ENCODE measurements at regions of chr9 and their contacts with region 1.

Region 1: GRCh38 chr9:37626708-37627293 is 24.0 kb upstream of the FRMPD1 start:
- DNase-seq: no peak
- ATAC-seq: no peak
- H3K4me3 ChIP-seq: no peak overlapping the region
- H3K27ac ChIP-seq: no peak overlapping the region
- H3K4me1 ChIP-seq: no peaks in the 10 kb centered on the region
- H3K27me3 ChIP-seq: no peaks in the 10 kb centered on the region
- CTCF ChIP-seq: no peak

Region 2: GRCh38 chr9:37706290-37706689 is 79.5 kb after region 1 on chr9:
- CTCF ChIA-PET with region 1: no interaction called
- POLR2A ChIA-PET with region 1: interaction called, 22 read pairs
- intact Hi-C with region 1: no loop called
- DNase-seq: peak; percentile 22
- ATAC-seq: peak; percentile 60
- H3K4me3 ChIP-seq: no peak overlapping the region
- H3K27ac ChIP-seq: no peak overlapping the region
- H3K4me1 ChIP-seq: no peaks in the 10 kb centered on the region
- H3K27me3 ChIP-seq: peaks cover 28% of the 10 kb centered on the region
- CTCF ChIP-seq: no peak

Measured in PC-3 (cell line).